ENCODE measurements at regions of chr3 and their contacts with region 1.

Region 1: DNA sequence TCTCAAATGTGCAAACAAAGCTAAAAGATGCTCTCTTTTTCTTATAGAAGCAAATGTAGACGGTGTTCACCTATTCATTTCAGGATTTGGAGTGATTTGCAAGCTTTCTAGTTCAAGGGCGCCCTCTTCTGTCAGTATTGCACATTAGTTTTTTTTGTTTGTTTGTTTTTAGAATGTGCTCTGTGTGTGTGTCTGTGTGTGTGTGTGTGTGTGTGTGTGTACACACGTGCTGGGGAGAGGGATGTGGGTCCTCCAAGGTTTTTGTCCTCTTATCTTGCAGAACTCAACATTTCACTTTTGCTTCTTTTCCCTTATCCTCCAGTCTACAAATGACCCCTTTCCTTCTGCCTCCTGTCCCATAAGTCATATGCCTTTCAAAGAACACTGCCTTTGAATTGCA is 23.5 kb downstream of the DNAH1 start:
- DNase-seq: peak in 2 of 5 donors; percentile 28 to 35
- ATAC-seq: peak in 3 of 4 donors; percentile 40 to 59 (median 52)
- H3K4me3 ChIP-seq: no peak overlapping the region
- H3K27ac ChIP-seq: no peak overlapping the region
- H3K4me1 ChIP-seq: no peaks in the 10 kb centered on the region
- H3K27me3 ChIP-seq: no peaks in the 10 kb centered on the region
- CTCF ChIP-seq: peak; percentile 53 to 82 (median 72)
- POLR2A ChIP-seq: no peak

Region 2: DNA sequence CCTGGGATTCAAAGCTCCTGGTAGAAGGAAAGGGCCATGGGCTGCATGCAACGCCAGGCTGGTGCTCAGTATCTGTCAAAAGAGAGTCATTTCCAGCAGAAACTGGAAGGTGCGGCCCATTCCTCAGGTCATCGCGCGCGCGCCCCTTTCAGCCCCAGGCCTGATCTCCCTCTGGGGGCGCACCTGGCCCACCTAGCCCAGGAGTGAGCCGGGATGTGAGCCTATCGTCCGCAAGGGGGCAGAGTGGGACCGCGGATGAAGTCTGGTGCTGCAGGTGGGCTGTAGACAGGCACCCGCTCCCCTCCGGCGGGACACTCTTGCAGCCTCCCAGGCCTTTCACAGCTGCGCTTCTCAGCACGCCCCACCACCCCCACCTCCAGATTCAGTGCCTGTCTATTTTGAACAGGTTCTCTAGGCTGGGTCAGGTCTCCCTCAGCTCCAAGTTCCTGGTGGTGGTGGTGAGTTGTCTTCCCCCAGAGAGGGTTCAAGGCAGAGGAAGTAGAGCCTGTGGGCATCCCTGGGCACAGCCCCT is 338.1 kb before region 1 on chr3:
- intact Hi-C with region 1: loop called in 8 of 10 experiments (anchors 5 to 10 kb)
- DNase-seq: peak; percentile 69 to 88 (median 74)
- ATAC-seq: peak; percentile 35 to 67 (median 63)
- H3K4me3 ChIP-seq: no peak overlapping the region
- H3K27ac ChIP-seq: no peak overlapping the region
- H3K4me1 ChIP-seq: peaks cover 13 to 34% (median 31%) of the 10 kb centered on the region in 12 donors
- H3K27me3 ChIP-seq: no peaks in the 10 kb centered on the region
- CTCF ChIP-seq: peak; percentile 76 to 96 (median 90)
- POLR2A ChIP-seq: no peak

Region 3: GRCh38 chr3:52154117-52155094 is 185.2 kb before region 1 on chr3 and contains the start of gene POC1A:
- intact Hi-C with region 1: loop called in 1 of 10 experiments (anchors 10 kb)
- DNase-seq: peak; percentile 95 to 99 (median 96)
- ATAC-seq: peak; percentile 98 to 99 (median 98)
- H3K4me3 ChIP-seq: peak within 1 kb of the TSS; percentile 38 to 73 (median 66)
- H3K27ac ChIP-seq: peak within 1 kb of the TSS; percentile 9 to 95 (median 88)
- H3K4me1 ChIP-seq: peaks cover 4 to 18% (median 13%) of the 10 kb centered on the region in 12 donors
- H3K27me3 ChIP-seq: no peaks in the 10 kb centered on the region
- CTCF ChIP-seq: peak in 6 of 12 donors; percentile 8 to 34 (median 19)
- POLR2A ChIP-seq: peak in 1 of 2 donors; percentile 64
- total RNA-seq, gene POC1A: 0.66 to 5.2 (median 1.4) TPM

Region 4: DNA sequence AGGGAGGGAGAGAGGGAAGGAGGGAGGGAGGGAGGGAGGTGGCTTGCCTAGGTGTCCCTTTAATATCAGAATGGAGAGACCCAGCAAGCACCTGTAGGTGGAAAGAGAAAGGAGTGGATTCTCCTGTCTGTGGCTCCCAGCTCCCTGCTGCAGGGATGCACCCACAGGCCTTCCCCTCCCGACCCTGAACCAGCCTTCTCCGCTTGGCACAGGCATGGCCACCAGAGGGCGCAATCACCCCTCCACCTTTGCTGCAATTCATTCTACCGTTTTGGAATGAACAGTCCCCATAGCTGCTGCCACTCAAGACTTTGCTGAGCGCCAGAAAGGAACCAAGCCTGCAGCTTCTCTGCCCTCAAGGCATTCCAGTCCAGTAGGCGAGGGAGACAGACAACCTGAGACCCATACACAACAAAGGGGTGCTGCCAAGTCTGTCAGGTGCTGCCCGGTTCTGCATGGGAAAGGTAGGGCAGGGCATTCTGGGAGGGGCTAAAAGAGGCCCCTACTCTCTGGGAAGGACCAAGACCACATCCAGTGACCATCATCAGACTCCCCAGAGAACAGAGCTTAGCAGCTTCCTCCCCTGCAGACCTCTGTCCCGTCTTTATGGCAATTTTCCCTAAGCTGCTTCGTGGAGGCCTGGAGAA is 119.1 kb before region 1 on chr3:
- intact Hi-C with region 1: loop called in 8 of 10 experiments (anchors 1 to 5 kb)
- DNase-seq: peak; percentile 78 to 92 (median 86)
- ATAC-seq: peak in 3 of 4 donors; percentile 60 to 68 (median 63)
- H3K4me3 ChIP-seq: no peak overlapping the region
- H3K27ac ChIP-seq: no peak overlapping the region
- H3K4me1 ChIP-seq: peaks cover 5 to 64% (median 40%) of the 10 kb centered on the region in 12 donors
- H3K27me3 ChIP-seq: no peaks in the 10 kb centered on the region
- CTCF ChIP-seq: peak; percentile 85 to 93 (median 90)
- POLR2A ChIP-seq: no peak

Region 5: GRCh38 chr3:52238761-52239701 is 100.6 kb before region 1 on chr3 and contains the start of gene TWF2:
- intact Hi-C with region 1: loop called in 3 of 10 experiments (anchors 5 kb)
- DNase-seq: peak; percentile 85 to 92 (median 88)
- ATAC-seq: peak; percentile 33 to 86 (median 77)
- H3K4me3 ChIP-seq: peak within 1 kb of the TSS; percentile 79 to 99 (median 96)
- H3K27ac ChIP-seq: peak within 1 kb of the TSS; percentile 66 to 97 (median 91)
- H3K4me1 ChIP-seq: peaks cover 10 to 75% (median 45%) of the 10 kb centered on the region in 12 donors
- H3K27me3 ChIP-seq: no peaks in the 10 kb centered on the region
- CTCF ChIP-seq: peak; percentile 24 to 66 (median 41)
- POLR2A ChIP-seq: peak in 1 of 2 donors; percentile 88
- total RNA-seq, gene TWF2: 62.9 to 133 (median 117) TPM

Measured in heart left ventricle (tissue), 16 donors.